Posterior cingulate gyrus (tissue), 11 donors: ENCODE measurements at regions of chr1 and their contacts with region 1.

Region 1: DNA sequence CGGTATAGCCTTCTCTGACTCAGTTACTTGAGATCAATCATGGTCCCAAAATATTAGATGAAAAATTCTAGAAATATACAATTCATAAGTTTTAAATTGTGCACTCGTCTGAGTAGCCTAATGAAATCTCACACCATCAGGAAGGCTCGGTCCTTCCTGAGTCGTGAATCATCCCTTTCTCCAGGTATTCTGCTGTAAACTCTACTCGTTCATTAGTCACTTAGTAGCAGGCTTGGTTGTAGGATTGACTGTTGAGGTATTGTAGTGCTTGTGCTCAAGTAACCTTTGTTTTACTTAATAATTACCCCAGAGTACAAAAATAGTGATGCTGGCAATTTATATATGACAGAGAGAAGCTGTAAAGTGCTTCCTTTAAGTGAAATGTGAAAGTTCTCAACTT is 238.7 kb downstream of the OLFM3 start:
- DNase-seq: no peak

Region 2: GRCh38 chr1:101161619-101162018 is 596.4 kb before region 1 on chr1:
- intact Hi-C with region 1: no loop called
- DNase-seq: no peak

Region 3: DNA sequence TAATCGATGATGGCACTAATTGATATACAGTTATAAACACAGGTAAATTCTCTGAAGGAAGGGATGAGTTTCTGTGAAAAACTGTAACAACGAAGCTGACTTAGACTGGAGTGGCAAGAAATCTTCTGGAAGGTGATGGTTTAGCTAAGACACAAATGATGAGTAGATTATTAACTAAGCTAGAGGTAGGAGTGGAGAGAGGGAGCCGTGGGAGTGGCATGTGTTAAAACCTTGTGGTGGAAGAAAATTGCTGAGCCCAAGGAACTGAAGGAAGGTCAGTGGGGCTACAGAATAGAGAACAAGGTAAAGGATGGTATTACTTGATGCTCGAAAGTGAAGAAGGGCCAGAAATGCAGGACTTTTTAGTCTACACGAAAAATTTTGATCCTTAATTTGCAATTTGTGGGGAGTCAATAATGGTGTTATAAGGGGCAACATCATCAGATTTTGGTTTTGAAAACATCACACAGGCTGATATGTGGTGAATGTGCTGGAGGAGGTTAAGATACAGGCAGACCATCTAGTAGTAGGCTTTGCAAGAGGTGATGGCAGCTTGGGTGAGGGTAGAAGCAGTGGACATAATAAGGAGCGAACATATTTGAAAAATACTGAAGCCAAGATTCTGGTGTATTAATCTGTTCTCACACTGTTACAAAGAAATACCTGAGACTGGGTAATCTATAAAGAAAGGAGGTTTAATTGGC is 427.4 kb before region 1 on chr1:
- intact Hi-C with region 1: no loop called
- DNase-seq: no peak

Region 4: GRCh38 chr1:101697072-101697471 is 60.9 kb before region 1 on chr1:
- intact Hi-C with region 1: no loop called
- DNase-seq: no peak

Region 5: DNA sequence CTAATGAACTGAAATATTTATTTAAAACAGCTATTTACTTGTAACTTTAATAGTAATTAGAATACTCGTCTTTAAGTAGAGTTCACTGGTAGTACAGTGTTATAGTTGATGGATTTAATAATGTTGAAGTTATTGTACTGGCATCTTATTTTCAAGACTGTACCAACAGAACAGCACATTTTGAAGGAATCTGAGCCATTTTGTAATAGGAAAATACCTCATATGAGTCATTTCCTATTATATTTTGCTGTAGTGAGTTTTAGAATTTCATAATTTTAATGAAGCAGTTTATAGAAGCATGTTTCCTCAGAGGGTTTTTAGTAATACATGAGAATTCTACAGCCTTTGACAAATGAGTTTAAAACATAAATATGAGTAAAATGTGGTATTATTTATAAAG is 19.5 kb before region 1 on chr1:
- intact Hi-C with region 1: loop called (anchors 1 kb)
- DNase-seq: no peak